GM10248 (cell line): ENCODE measurements at regions of chr20 and their contacts with region 1.

Region 1: DNA sequence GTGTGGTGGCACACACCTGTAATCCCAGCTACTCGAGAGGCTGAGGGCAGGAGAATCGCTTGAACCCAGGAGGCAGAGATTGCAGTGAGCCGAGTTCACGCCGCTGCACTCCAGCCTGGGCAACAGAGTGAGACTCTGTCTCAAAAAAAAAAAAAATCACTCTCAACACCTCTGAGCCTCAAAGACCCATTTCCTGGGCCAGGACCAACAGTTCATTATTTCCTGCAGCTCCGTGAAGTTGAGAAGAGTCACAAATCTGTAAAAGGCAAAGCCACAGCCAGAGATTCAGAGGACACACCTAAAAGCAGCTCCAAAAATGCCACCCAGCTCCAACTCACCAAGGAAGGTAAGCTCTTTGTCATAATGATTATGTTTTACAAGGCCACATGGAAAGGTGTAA is 15.2 kb upstream of the NOP56 start:
- DNase-seq: no peak
- CTCF ChIP-seq: no peak

Region 2: GRCh38 chr20:2651772-2652723 is 14.8 kb after region 1 on chr20 and contains the start of gene NOP56:
- CTCF ChIA-PET with region 1: interaction called, 14 read pairs
- POLR2A ChIA-PET with region 1: no interaction called
- DNase-seq: peak; percentile 94
- CTCF ChIP-seq: no peak